Caco-2 (cell line): ENCODE measurements at regions of chr2 and their contacts with region 1.

Region 1: DNA sequence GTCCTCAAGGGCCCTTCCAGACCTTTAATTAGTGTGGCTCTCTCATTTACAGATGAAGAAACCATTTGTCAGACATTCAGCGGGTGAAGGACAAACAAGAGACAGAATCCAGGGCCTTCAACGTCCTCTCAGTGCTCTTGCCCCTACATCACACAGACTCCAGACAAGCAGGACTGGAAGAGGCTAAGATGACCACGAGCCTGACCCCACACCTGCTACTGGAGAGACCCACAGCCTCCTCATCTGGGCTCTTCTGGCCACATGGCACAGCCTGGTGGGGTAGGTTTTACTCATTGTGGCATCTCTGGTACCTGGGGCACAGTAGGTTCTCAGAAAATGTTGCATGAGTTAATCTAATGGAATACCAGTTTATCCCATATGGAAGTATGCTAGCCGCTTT is 69.6 kb upstream of the TMEM247 start:
- DNase-seq: no peak
- H3K4me3 ChIP-seq: no peak overlapping the region
- H3K4me3 Mint-ChIP-seq: peak overlapping the region; percentile 50
- H3K27ac Mint-ChIP-seq: peak overlapping the region; percentile 88
- H3K4me1 ChIP-seq: peaks cover 27% of the 10 kb centered on the region
- H3K4me1 Mint-ChIP-seq: peaks cover 27% of the 10 kb centered on the region
- H3K27me3 ChIP-seq: no peaks in the 10 kb centered on the region
- H3K27me3 Mint-ChIP-seq: no peaks in the 10 kb centered on the region
- CTCF ChIP-seq: no peak

Region 2: DNA sequence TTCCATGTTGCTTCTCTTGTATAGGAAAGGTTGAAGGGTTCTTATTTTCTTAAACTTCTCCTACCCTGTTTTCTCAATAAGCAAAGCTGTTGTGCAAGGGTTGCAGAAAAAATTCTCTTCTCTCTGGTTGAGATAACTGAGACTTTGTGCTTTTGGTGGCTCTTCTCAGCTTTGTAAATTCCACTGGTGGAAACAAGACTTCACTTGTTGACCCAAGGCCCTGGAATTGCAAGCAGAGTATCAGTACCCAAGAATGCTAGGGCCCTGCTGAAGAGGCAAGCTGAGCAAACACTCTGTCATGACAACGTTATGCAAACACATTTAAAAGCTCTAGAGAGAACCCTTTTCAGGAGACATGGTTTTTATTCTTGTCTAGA is 407.3 kb before region 1 on chr2:
- CTCF ChIA-PET with region 1: no interaction called
- POLR2A ChIA-PET with region 1: no interaction called
- intact Hi-C with region 1: loop called (anchors 1 kb)
- DNase-seq: peak; percentile 71 to 72
- H3K4me3 ChIP-seq: no peak overlapping the region
- H3K4me3 Mint-ChIP-seq: no peak overlapping the region
- H3K27ac Mint-ChIP-seq: peak overlapping the region; percentile 67
- H3K4me1 ChIP-seq: peaks cover 41% of the 10 kb centered on the region
- H3K4me1 Mint-ChIP-seq: peaks cover 53% of the 10 kb centered on the region
- H3K27me3 ChIP-seq: no peaks in the 10 kb centered on the region
- H3K27me3 Mint-ChIP-seq: no peaks in the 10 kb centered on the region
- CTCF ChIP-seq: no peak

Region 3: DNA sequence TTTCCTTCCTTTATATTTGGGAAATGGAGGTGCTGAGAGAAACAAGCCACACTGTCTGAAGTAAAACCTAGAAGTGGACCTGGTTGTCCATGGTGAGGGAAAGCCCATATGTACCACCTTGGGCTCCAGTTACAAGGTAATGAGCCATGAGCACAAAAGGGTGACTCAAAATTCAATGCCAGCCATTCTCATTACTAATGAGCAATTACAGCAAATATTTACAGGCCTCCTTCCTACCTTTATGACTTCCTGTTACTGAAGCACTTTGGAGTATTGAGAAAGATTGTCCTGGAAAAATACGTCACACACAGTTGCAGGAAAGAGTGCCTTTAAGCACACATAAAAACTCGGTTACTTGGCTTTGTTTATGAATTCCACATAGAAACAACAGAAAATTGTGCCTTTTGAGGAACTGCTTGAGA is 103.4 kb before region 1 on chr2:
- CTCF ChIA-PET with region 1: no interaction called
- POLR2A ChIA-PET with region 1: no interaction called
- intact Hi-C with region 1: loop called (anchors 2 kb)
- DNase-seq: peak in 1 of 2 experiments; percentile 42
- H3K4me3 ChIP-seq: no peak overlapping the region
- H3K4me3 Mint-ChIP-seq: no peak overlapping the region
- H3K27ac Mint-ChIP-seq: peak overlapping the region; percentile 49
- H3K4me1 ChIP-seq: peaks cover 72% of the 10 kb centered on the region
- H3K4me1 Mint-ChIP-seq: peaks cover 75% of the 10 kb centered on the region
- H3K27me3 ChIP-seq: no peaks in the 10 kb centered on the region
- H3K27me3 Mint-ChIP-seq: no peaks in the 10 kb centered on the region
- CTCF ChIP-seq: no peak

Region 4: GRCh38 chr2:46335391-46336282 is 74.1 kb before region 1 on chr2:
- CTCF ChIA-PET with region 1: no interaction called
- POLR2A ChIA-PET with region 1: no interaction called
- intact Hi-C with region 1: loop called (anchors 1 kb)
- DNase-seq: peak; percentile 67 to 75
- H3K4me3 ChIP-seq: peak overlapping the region; percentile 34
- H3K4me3 Mint-ChIP-seq: peak overlapping the region; percentile 83
- H3K27ac Mint-ChIP-seq: peak overlapping the region; percentile 77
- H3K4me1 ChIP-seq: peaks cover 52% of the 10 kb centered on the region
- H3K4me1 Mint-ChIP-seq: peaks cover 66% of the 10 kb centered on the region
- H3K27me3 ChIP-seq: no peaks in the 10 kb centered on the region
- H3K27me3 Mint-ChIP-seq: no peaks in the 10 kb centered on the region
- CTCF ChIP-seq: no peak

Region 5: GRCh38 chr2:46431481-46432205 is 21.9 kb after region 1 on chr2:
- CTCF ChIA-PET with region 1: interaction called, 3 read pairs
- POLR2A ChIA-PET with region 1: interaction called, 3 read pairs
- intact Hi-C with region 1: loop called (anchors 1 kb)
- DNase-seq: peak in 1 of 2 experiments; percentile 28
- H3K4me3 ChIP-seq: no peak overlapping the region
- H3K4me3 Mint-ChIP-seq: no peak overlapping the region
- H3K27ac Mint-ChIP-seq: no peak overlapping the region
- H3K4me1 ChIP-seq: peaks cover 15% of the 10 kb centered on the region
- H3K4me1 Mint-ChIP-seq: peaks cover 20% of the 10 kb centered on the region
- H3K27me3 ChIP-seq: no peaks in the 10 kb centered on the region
- H3K27me3 Mint-ChIP-seq: no peaks in the 10 kb centered on the region
- CTCF ChIP-seq: no peak

Region 6: GRCh38 chr2:46461011-46461674 is 51.4 kb after region 1 on chr2:
- CTCF ChIA-PET with region 1: interaction called, 3 read pairs
- POLR2A ChIA-PET with region 1: no interaction called
- intact Hi-C with region 1: loop called (anchors 2 kb)
- DNase-seq: peak; percentile 63 to 88
- H3K4me3 ChIP-seq: no peak overlapping the region
- H3K4me3 Mint-ChIP-seq: no peak overlapping the region
- H3K27ac Mint-ChIP-seq: peak overlapping the region; percentile 12
- H3K4me1 ChIP-seq: no peaks in the 10 kb centered on the region
- H3K4me1 Mint-ChIP-seq: peaks cover 5% of the 10 kb centered on the region
- H3K27me3 ChIP-seq: no peaks in the 10 kb centered on the region
- H3K27me3 Mint-ChIP-seq: no peaks in the 10 kb centered on the region
- CTCF ChIP-seq: peak; percentile 97 to 98

Region 7: GRCh38 chr2:46547223-46548102 is 137.7 kb after region 1 on chr2:
- CTCF ChIA-PET with region 1: no interaction called
- POLR2A ChIA-PET with region 1: no interaction called
- intact Hi-C with region 1: no loop called
- DNase-seq: no peak
- H3K4me3 ChIP-seq: no peak overlapping the region
- H3K4me3 Mint-ChIP-seq: no peak overlapping the region
- H3K27ac Mint-ChIP-seq: no peak overlapping the region
- H3K4me1 ChIP-seq: peaks cover 10% of the 10 kb centered on the region; the same call in 1 of the 2 replicates
- H3K4me1 Mint-ChIP-seq: peaks cover 10% of the 10 kb centered on the region
- H3K27me3 ChIP-seq: no peaks in the 10 kb centered on the region
- H3K27me3 Mint-ChIP-seq: no peaks in the 10 kb centered on the region
- CTCF ChIP-seq: no peak